Activated T-helper 2 cell treated with anti-CD3 and anti-CD28 coated beads, Interferon-gamma antibody, Interleukin-2, Interleukin-4, amounts not matched to agents 10 μg/mL and 5 μg/mL and 100 μg/mL, durations not matched to agents 14 hours and 24 hours and 36 hours (primary cell): ENCODE measurements at regions of chr16 and their contacts with region 1.

Region 1: GRCh38 chr16:46607529-46607928 is 13.7 kb downstream of the SHCBP1 start:
- DNase-seq: no peak
- H3K4me3 Mint-ChIP-seq: no peak overlapping the region
- H3K27ac Mint-ChIP-seq: no peak overlapping the region
- H3K4me1 Mint-ChIP-seq: no peaks in the 10 kb centered on the region
- H3K27me3 Mint-ChIP-seq: no peaks in the 10 kb centered on the region

Region 2: GRCh38 chr16:46555951-46556350 is 51.6 kb before region 1 on chr16:
- intact Hi-C with region 1: loop called (anchors 1 kb)
- DNase-seq: no peak
- H3K4me3 Mint-ChIP-seq: no peak overlapping the region
- H3K27ac Mint-ChIP-seq: no peak overlapping the region
- H3K4me1 Mint-ChIP-seq: peaks cover 7% of the 10 kb centered on the region
- H3K27me3 Mint-ChIP-seq: peaks cover 15% of the 10 kb centered on the region